Left colon (tissue), 2 donors: ENCODE measurements at regions of chr19 and their contacts with region 1.

Region 1: GRCh38 chr19:35352448-35353304 is 5.0 kb downstream of the FFAR1 start:
- DNase-seq: peak; percentile 50 to 66
- ATAC-seq: peak; percentile 83

Region 2: DNA sequence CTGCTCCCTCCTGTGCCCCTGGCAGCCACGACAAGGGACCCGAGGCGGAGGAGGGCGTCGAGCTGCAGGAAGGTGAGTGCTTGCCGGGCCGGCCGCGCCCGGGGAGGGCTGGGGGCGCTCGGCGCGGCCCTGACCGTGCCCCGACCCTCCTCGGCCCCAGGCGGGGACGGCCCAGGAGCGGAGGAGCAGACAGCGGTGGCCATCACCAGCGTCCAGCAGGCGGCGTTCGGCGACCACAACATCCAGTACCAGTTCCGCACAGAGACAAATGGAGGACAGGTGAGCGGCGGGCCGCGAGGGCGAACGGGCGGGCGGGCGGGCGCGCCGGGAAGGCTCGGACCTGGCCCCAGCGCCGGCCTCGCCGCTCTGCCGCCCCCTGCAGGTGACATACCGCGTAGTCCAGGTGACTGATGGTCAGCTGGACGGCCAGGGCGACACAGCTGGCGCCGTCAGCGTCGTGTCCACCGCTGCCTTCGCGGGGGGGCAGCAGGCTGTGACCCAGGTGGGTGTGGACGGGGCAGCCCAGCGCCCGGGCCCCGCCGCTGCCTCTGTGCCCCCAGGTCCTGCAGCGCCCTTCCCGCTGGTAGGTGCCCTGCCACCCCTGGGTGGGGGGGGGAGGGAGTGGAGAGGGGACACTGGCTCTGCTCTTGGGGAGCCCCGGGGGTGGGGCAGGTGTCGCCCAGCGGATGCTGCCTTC is 83.1 kb before region 1 on chr19:
- intact Hi-C with region 1: no loop called
- DNase-seq: peak; percentile 84 to 93
- ATAC-seq: peak; percentile 57

Region 3: GRCh38 chr19:35449053-35449687 is 96.5 kb after region 1 on chr19:
- intact Hi-C with region 1: no loop called
- DNase-seq: no peak
- ATAC-seq: peak; percentile 73

Region 4: DNA sequence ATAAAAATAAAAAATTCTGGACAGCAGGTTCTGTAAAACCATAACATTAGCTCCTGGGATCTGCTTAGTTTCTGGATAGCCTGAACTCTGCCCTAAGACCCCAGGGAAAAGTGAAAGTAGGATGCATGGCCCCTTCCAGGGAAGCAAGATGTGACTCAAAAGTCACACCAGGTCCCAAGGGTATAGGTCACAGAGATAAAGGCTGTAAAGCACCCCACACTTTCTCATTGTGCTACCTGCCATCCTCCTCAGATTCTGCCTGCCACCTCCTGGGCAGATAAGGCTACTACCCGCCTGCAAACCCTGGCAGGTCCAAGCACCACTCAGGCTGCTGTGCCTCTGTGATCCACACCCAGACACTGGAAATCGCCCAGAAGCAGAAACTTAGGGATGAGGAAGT is 116.0 kb after region 1 on chr19:
- intact Hi-C with region 1: no loop called
- DNase-seq: peak; percentile 49 to 70
- ATAC-seq: peak; percentile 100

Region 5: GRCh38 chr19:35495107-35496064 is 142.7 kb after region 1 on chr19:
- intact Hi-C with region 1: loop called (anchors 5 to 10 kb)
- DNase-seq: peak; percentile 35 to 64
- ATAC-seq: peak; percentile 98